Mammary epithelial cell (primary cell): ENCODE measurements at regions of chr4 and their contacts with region 1.

Region 1: GRCh38 chr4:87120411-87121199 is 99.8 kb downstream of the KLHL8 start:
- DNase-seq: peak; percentile 97
- H3K4me3 ChIP-seq: peak overlapping the region; percentile 13 to 42 (median 40)
- H3K27ac ChIP-seq: peak overlapping the region; percentile 96
- H3K4me1 ChIP-seq: peaks cover 40% of the 10 kb centered on the region
- H3K27me3 ChIP-seq: no peaks in the 10 kb centered on the region
- CTCF ChIP-seq: peak in 1 of 2 donors; percentile 42

Region 2: GRCh38 chr4:86497980-86498862 is 622.4 kb before region 1 on chr4:
- CTCF ChIA-PET with region 1: no interaction called
- dilution Hi-C with region 1: no loop called
- in situ Hi-C with region 1: no loop called
- intact Hi-C with region 1: loop called (anchors 10 kb)
- DNase-seq: peak; percentile 40
- H3K4me3 ChIP-seq: no peak overlapping the region
- H3K27ac ChIP-seq: no peak overlapping the region
- H3K4me1 ChIP-seq: peaks cover 26% of the 10 kb centered on the region
- H3K27me3 ChIP-seq: no peaks in the 10 kb centered on the region
- CTCF ChIP-seq: peak; percentile 78 to 89

Region 3: GRCh38 chr4:86879641-86880040 is 241.0 kb before region 1 on chr4:
- CTCF ChIA-PET with region 1: no interaction called
- dilution Hi-C with region 1: no loop called
- in situ Hi-C with region 1: no loop called
- intact Hi-C with region 1: no loop called
- DNase-seq: no peak
- H3K4me3 ChIP-seq: no peak overlapping the region
- H3K27ac ChIP-seq: no peak overlapping the region
- H3K4me1 ChIP-seq: no peaks in the 10 kb centered on the region
- H3K27me3 ChIP-seq: no peaks in the 10 kb centered on the region
- CTCF ChIP-seq: no peak

Region 4: GRCh38 chr4:86921608-86922252 is 198.9 kb before region 1 on chr4:
- CTCF ChIA-PET with region 1: interaction called, 13 read pairs
- dilution Hi-C with region 1: no loop called
- in situ Hi-C with region 1: loop called in 1 of 2 experiments (anchors 5 kb)
- intact Hi-C with region 1: loop called (anchors 1 kb)
- DNase-seq: peak; percentile 68
- H3K4me3 ChIP-seq: no peak overlapping the region
- H3K27ac ChIP-seq: peak overlapping the region; percentile 92
- H3K4me1 ChIP-seq: peaks cover 55% of the 10 kb centered on the region
- H3K27me3 ChIP-seq: no peaks in the 10 kb centered on the region
- CTCF ChIP-seq: no peak

Region 5: DNA sequence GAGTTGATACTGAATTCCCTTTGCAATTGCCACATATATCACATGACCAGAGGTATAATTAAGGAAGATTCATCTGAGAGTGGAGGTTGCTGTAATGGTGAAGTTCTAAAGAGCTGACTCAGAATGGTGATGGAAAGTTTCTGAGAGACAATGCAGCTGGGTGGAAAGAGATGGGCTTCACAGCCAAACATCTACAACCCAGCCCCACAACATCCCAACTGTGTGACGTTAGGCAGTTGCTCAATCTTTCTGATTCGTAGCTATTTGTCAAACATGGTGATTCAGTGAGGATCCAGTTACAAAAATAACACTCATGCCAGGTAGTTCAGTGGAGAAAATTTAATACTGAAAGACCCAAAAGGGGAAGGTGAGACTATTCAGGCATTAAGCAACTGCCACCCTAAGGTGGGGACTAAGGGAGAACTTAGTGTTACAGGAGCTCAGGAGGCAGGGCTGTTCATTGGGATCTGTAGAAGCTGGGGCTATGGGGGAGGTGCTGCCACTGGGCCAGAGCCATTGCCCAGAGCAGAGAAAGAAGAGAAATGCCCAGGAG is 192.7 kb before region 1 on chr4:
- CTCF ChIA-PET with region 1: interaction called, 13 read pairs
- dilution Hi-C with region 1: no loop called
- in situ Hi-C with region 1: loop called in 1 of 2 experiments (anchors 5 kb)
- intact Hi-C with region 1: no loop called
- DNase-seq: peak; percentile 99
- H3K4me3 ChIP-seq: no peak overlapping the region
- H3K27ac ChIP-seq: peak overlapping the region; percentile 97
- H3K4me1 ChIP-seq: peaks cover 43% of the 10 kb centered on the region
- H3K27me3 ChIP-seq: no peaks in the 10 kb centered on the region
- CTCF ChIP-seq: no peak

Region 6: GRCh38 chr4:86972997-86973396 is 147.6 kb before region 1 on chr4:
- CTCF ChIA-PET with region 1: no interaction called
- dilution Hi-C with region 1: no loop called
- in situ Hi-C with region 1: no loop called
- intact Hi-C with region 1: no loop called
- DNase-seq: peak; percentile 30
- H3K4me3 ChIP-seq: no peak overlapping the region
- H3K27ac ChIP-seq: no peak overlapping the region
- H3K4me1 ChIP-seq: peaks cover 25% of the 10 kb centered on the region
- H3K27me3 ChIP-seq: no peaks in the 10 kb centered on the region
- CTCF ChIP-seq: no peak

Region 7: GRCh38 chr4:87060957-87061356 is 59.6 kb before region 1 on chr4:
- CTCF ChIA-PET with region 1: no interaction called
- dilution Hi-C with region 1: no loop called
- in situ Hi-C with region 1: no loop called
- intact Hi-C with region 1: loop called (anchors 2 kb)
- DNase-seq: peak; percentile 93
- H3K4me3 ChIP-seq: no peak overlapping the region
- H3K27ac ChIP-seq: peak overlapping the region; percentile 89
- H3K4me1 ChIP-seq: peaks cover 27% of the 10 kb centered on the region
- H3K27me3 ChIP-seq: no peaks in the 10 kb centered on the region
- CTCF ChIP-seq: no peak

Region 8: GRCh38 chr4:87108142-87108546 is 12.5 kb before region 1 on chr4:
- CTCF ChIA-PET with region 1: no interaction called
- dilution Hi-C with region 1: no loop called
- in situ Hi-C with region 1: no loop called
- intact Hi-C with region 1: loop called (anchors 2 kb)
- DNase-seq: peak; percentile 59
- H3K4me3 ChIP-seq: no peak overlapping the region
- H3K27ac ChIP-seq: peak overlapping the region; percentile 18
- H3K4me1 ChIP-seq: peaks cover 27% of the 10 kb centered on the region
- H3K27me3 ChIP-seq: no peaks in the 10 kb centered on the region
- CTCF ChIP-seq: no peak

Region 9: DNA sequence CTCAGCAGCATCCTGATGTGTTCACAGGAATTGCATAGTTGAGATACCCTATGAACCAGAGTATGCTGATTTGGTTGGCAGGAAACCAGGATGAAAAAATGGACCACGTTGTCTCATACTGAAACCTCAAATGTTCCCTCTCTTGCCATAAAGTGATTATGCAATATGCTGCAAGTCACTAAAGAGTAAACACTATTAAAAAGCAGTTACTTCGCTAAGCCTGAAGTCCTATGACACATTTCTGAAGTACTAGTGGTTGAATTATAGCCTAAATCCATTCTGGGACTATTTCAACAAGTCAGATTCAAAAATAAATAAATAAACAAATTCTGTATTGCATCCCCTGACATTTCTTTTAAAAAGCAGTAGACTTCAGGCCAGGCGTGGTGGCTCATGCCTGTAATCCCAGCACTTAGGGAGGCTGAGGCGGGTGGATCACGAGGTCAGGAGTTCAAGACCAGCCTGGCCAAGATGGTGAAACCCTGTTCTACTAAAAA is 1683.0 kb after region 1 on chr4:
- CTCF ChIA-PET with region 1: no interaction called
- dilution Hi-C with region 1: no loop called
- in situ Hi-C with region 1: no loop called
- intact Hi-C with region 1: no loop called
- DNase-seq: peak; percentile 82
- H3K4me3 ChIP-seq: no peak overlapping the region
- H3K27ac ChIP-seq: no peak overlapping the region
- H3K4me1 ChIP-seq: peaks cover 6% of the 10 kb centered on the region
- H3K27me3 ChIP-seq: no peaks in the 10 kb centered on the region
- CTCF ChIP-seq: no peak